ENCODE measurements at regions of chr1 and their contacts with region 1.

Region 1: DNA sequence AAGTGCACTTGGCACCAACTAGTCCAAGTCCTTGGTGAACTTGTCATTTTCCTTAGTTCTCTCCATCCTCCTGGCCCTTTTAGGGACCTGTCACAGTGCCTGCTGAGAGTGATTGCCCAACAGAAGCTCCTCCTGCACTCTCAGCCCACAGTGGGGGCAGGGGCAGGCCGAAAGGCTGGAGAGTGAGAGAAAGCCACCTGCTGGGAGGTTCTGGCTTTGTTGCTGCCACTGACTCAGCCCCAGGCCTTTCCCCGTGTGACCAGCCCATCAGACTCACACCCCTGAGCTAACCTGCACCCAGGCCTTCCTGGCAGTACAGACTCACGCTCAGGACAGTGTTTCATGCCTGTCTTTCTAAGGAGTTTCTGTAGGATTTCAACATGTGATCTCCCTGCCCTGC is 17.1 kb upstream of the PROK1 start:
- DNase-seq: peak; percentile 49 to 68 (median 65)
- H3K4me3 ChIP-seq: no peak overlapping the region
- H3K27ac ChIP-seq: no peak overlapping the region
- H3K4me1 ChIP-seq: peaks cover 0 to 36% (median 23%) of the 10 kb centered on the region in 4 experiments
- H3K27me3 ChIP-seq: no peaks in the 10 kb centered on the region

Region 2: DNA sequence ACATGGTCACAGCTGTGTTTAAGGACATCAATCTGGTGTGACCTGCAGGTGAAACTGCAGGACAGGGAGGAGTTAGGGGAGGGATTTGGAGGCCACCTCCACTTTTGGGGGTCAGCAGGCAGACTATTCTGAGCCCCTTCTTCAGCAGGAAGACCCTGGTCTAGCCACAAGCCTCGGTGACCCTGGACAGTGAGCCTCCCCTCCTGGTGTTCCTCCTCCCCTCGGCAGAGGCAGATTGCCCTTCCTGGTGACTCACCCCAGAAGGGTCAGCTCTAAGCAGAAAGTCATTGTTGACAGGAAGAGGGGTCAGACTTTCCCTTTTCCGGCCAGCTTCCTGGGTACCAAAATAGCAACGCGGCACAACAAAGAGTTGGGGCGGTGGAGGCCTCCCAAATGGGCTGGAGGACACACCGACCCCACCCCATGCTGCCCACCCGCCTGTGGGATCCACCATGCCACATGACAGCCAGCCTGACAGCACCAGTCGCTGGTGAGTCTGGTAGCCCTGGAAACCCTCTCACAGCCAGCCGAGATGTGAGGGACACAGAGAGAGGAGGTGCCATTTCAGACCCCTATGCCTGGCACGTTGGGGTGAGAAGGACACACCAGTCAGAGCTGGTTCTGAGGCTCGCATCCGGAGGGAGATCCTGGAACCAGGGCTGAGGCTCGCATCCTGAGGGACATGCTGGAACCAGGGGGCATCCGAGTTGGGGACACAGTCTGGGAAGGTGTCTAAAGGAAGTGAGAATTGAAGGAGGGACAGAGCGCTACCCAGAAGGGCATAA is 537.9 kb before region 1 on chr1:
- CTCF ChIA-PET with region 1: no interaction called
- POLR2A ChIA-PET with region 1: no interaction called
- DNase-seq: peak; percentile 25 to 74 (median 66)
- H3K4me3 ChIP-seq: peak overlapping the region in 2 of 7 experiments; percentile 11 to 16
- H3K27ac ChIP-seq: peak overlapping the region in 1 of 2 experiments; percentile 20
- H3K4me1 ChIP-seq: peaks cover 0 to 19% (median 16%) of the 10 kb centered on the region in 4 experiments
- H3K27me3 ChIP-seq: no peaks in the 10 kb centered on the region

Region 3: DNA sequence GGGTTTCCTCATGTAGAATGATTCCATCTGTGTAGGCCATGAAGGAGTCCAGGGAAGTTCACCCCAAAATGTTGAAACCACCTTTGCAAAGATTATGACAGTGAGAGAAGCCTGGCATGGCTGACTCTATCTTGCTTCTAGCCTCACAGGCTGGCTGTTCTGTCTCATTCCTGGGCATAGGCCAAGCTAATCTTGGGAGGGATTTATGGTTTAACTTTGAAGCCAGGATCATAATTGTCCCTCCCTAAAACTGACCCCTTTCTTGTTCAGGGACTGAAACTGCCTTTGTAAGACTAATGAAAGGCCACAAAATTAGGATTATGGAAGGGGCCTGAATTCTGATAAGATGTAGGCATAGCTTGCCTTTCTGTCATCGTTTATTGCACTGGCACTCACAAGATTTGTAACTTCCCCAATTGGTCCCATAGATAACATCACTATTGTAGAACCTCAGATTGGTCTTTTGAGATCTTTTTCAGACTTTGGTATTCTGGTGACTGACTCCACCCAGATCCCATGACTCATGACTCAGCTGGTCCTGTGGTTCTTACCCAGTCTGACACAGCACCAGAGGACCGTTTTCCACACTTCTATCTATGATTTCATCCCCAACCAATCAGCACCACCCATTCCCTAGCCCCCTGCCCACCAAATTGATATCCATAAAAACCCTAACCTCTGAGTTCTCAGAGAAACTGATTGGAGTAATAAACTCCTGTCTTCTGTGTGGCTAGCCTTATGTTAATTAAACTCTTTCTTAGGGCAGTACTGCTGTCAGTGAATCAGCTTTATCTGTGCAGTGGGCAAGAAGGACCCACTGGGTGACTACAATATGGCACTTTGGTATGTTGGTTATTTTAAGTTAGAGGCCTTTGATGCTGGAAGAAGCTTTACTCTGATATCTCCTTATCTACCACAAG is 12.7 kb before region 1 on chr1:
- CTCF ChIA-PET with region 1: interaction called, 83 read pairs
- POLR2A ChIA-PET with region 1: interaction called, 4 read pairs
- DNase-seq: peak; percentile 67 to 91 (median 87)
- H3K4me3 ChIP-seq: no peak overlapping the region
- H3K27ac ChIP-seq: no peak overlapping the region
- H3K4me1 ChIP-seq: peaks cover 0 to 7% (median 3%) of the 10 kb centered on the region in 4 experiments
- H3K27me3 ChIP-seq: no peaks in the 10 kb centered on the region

Region 4: DNA sequence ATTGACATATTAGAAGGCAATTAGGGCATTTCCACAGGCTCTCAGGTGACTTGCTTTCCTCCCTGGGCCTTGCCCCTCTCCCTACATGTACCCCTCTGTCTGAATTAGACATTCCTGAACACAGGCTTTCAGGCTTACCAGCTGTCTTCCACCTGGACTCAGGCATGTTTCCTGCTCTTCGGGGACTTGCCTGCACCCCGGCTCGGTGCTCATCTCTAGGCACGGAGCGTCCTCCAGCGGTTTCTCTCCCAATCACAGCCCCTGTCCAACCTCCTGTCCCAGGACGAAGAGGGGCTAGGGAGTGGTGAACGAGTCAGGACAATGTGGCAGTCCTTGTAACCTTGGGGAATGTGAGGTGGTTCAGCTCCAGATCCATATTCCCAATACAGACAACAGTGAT is 21.3 kb after region 1 on chr1:
- CTCF ChIA-PET with region 1: interaction called, 48 read pairs
- POLR2A ChIA-PET with region 1: no interaction called
- DNase-seq: no peak
- H3K4me3 ChIP-seq: no peak overlapping the region
- H3K27ac ChIP-seq: no peak overlapping the region
- H3K4me1 ChIP-seq: no peaks in the 10 kb centered on the region
- H3K27me3 ChIP-seq: no peaks in the 10 kb centered on the region

Measured in common myeloid progenitor, CD34-positive (primary cell).